ENCODE measurements at regions of chr15 and their contacts with region 1.

Region 1: DNA sequence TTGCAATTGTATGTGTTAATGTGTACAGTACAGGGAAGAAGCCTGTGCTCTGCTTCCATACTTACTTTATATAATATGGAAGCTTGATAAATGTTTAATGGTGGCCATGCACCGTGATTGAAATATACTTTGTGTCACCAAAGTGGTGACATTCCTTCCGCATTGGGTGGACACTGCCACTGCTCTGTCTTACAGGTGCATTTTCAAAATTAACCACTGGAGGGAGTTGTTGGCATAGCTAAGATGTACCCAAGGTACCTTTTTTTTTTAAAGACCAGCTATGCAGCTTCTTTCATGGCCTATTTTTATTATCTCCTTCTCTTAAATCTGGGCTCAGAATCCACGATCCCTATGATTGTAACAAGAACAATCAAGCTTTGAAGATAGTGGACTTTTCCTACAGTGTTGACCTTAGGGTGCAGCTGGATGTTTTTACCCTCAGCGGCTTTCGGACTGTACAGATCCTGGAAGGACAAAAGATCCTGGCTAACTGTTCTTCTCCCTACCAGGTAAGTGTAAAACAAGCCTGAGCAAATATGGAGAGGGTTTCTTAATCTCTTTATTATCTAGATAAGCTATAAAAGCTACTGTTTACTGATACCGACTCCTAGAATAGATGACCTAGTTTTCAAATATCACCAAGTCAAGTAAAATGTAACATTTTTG is 21.6 kb upstream of the PAK6 start:
- DNase-seq: no peak
- ATAC-seq: peak; percentile 87

Region 2: GRCh38 chr15:39594056-39594763 is 623.1 kb before region 1 on chr15:
- intact Hi-C with region 1: no loop called
- DNase-seq: no peak
- ATAC-seq: no peak

Region 3: GRCh38 chr15:40044717-40045571 is 172.3 kb before region 1 on chr15:
- intact Hi-C with region 1: loop called (anchors 10 kb)
- DNase-seq: peak; percentile 94
- ATAC-seq: peak; percentile 92

Region 4: DNA sequence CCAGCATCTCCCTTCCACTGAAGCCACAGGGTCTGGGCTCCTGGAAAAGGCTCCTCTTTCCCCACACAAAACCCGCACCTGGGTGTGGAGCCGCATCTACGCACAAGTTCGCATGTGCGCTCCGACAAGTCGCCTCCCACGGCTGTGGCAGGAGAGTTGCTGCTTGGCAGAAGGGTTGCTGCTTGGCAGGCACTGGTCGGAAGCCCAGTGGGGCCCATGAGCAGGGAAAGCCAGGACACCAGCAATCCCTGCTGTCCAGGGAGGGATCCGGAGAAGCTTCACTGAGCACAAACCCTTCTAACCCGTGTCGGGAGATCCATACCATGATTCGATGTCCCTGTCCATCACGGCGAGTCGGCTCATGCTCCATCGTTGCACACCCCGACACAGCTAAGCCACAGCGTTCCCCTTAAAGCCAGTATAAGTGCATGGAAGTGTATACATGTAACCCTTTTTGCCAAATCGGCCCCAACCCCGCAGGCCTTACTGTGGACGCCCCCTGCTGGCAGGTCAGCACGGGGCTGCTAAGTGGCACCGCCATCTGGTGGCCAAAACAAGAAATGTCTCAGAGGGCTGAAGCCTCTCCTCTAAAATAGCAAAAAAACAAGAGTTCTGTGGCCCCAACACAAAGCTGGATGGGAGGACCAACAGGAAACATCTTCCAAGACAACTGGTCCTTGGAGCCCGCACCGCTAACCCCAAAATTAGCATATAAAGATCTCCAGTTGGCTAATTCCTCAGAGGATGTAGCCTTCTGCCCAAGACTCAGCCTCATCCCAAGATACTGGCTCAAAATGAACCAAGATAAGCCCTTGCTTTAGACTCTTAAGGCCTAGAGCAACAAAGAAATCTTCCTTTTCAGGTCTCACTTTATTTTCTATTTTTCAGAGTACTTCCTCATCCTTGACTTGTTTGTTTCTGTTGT is 57.3 kb after region 1 on chr15:
- intact Hi-C with region 1: loop called (anchors 2 kb)
- DNase-seq: peak; percentile 89
- ATAC-seq: peak; percentile 55

Measured in left ventricle myocardium superior (tissue), 1 donor.